GM12878 (cell line): ENCODE measurements at regions of chr17 and their contacts with region 1.

Region 1: GRCh38 chr17:78176548-78177025 is 8.2 kb downstream of the SYNGR2 start:
- DNase-seq: no peak
- ATAC-seq: peak; percentile 68
- H3K4me3 ChIP-seq: no peak overlapping the region
- H3K27ac ChIP-seq: no peak overlapping the region
- H3K4me1 ChIP-seq: peaks cover 59% of the 10 kb centered on the region
- H3K27me3 ChIP-seq: no peaks in the 10 kb centered on the region
- CTCF ChIP-seq: peak; percentile 94 to 99 (median 99); a peak in 5 of 6 replicates
- EP300 ChIP-seq: no peak
- POLR2A ChIP-seq: peak; percentile 75
- RAD21 ChIP-seq: peak; percentile 82

Region 2: DNA sequence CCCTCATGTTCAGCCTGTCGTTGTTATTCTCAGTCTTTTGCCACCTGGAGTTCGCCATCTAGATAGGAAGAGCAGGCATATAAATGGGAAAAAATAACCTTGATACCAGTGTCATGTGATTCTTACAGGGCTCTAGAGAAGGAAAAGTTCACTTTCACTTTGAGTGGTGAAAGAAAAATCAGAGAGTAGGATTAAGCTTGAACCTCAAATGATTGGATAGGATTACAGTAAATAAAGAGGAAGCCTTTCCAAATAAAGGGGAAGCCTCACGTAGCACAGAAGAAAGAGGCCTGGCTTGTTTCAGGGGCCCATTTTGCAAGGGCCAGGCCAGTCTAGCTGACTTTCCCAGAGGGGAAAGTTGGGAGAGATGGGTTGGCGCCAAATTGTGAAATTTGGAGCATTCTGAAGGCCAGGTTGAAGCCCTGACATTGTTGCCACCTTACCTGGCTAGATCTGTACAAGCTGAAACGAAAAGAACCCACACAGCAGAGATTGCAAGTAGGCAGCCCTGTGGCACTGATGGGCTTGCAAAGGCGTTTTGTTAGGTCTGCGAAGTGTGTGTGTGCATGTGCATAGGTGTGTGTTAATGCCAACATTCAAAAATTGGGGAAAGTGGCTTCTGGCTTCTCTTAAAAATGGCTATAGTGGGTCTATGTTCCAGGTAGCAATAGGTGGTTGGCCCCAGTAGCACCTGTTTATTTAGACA is 86.9 kb before region 1 on chr17:
- CTCF ChIA-PET with region 1: interaction called, 49 read pairs
- POLR2A ChIA-PET with region 1: no interaction called
- RAD21 ChIA-PET with region 1: interaction called, 25 read pairs
- SMC1A ChIA-PET with region 1: interaction called, 8 read pairs
- in situ Hi-C with region 1: no loop called
- intact Hi-C with region 1: loop called (anchors 1 kb)
- DNase-seq: no peak
- ATAC-seq: no peak
- H3K4me3 ChIP-seq: no peak overlapping the region
- H3K27ac ChIP-seq: no peak overlapping the region
- H3K4me1 ChIP-seq: no peaks in the 10 kb centered on the region
- H3K27me3 ChIP-seq: no peaks in the 10 kb centered on the region
- CTCF ChIP-seq: no peak
- EP300 ChIP-seq: no peak
- POLR2A ChIP-seq: no peak
- RAD21 ChIP-seq: no peak

Region 3: GRCh38 chr17:78128551-78129350 is 47.8 kb before region 1 on chr17 and contains the start of gene TMC6:
- CTCF ChIA-PET with region 1: interaction called, 132 read pairs
- POLR2A ChIA-PET with region 1: interaction called, 85 read pairs
- RAD21 ChIA-PET with region 1: interaction called, 83 read pairs
- SMC1A ChIA-PET with region 1: interaction called, 51 read pairs
- in situ Hi-C with region 1: no loop called
- intact Hi-C with region 1: no loop called
- DNase-seq: no peak
- ATAC-seq: peak; percentile 13
- H3K4me3 ChIP-seq: peak within 1 kb of the TSS; percentile 94
- H3K27ac ChIP-seq: peak within 1 kb of the TSS; percentile 95
- H3K4me1 ChIP-seq: peaks cover 61% of the 10 kb centered on the region
- H3K27me3 ChIP-seq: no peaks in the 10 kb centered on the region
- CTCF ChIP-seq: no peak
- EP300 ChIP-seq: peak in 1 of 2 experiments; percentile 9; a peak in 1 of 4 replicates
- POLR2A ChIP-seq: peak; percentile 89
- RAD21 ChIP-seq: no peak
- polyA plus RNA-seq, gene TMC6: 1.9 to 11.5 TPM

Region 4: DNA sequence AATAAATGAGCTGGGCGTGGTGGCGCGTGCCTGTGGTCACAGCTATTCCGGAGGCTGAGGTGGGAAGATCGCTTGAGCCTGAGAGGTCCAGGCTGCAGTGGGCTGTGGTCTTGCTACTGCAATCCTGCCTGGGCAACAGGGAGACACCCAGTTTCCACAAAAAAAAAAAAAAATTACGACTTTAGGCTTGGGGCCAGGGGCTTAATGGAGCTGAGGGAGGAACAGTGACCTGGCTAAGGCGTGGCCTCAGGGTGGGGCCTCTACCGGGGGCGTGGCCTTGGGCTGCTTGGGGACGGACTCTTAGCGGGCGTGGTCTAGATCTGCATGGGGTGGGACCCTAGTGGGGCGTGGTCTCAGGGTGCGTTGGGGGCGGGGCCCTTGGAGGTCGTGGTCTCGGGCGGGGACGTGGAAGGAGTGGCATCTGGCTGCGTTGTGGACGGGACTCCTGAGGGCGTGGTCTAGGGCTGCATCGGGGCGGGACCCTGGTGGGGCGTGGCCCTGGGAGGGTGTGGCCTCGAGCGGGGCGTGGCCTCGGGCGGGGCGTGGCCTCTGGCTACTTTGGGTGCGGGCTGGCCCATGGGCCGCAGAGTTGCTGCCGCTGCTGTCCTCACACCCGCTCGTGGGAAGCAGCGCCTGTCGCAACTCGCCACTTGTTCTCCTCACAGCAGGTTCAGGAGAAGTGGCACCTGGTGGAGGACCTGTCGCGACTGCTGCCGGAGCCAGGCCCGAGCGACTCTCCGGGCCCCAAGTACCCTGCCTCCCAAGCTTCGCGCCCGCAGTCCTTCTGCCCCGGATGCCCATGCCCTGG is 36.2 kb before region 1 on chr17:
- CTCF ChIA-PET with region 1: interaction called, 132 read pairs
- POLR2A ChIA-PET with region 1: interaction called, 37 read pairs
- RAD21 ChIA-PET with region 1: interaction called, 83 read pairs
- SMC1A ChIA-PET with region 1: interaction called, 51 read pairs
- in situ Hi-C with region 1: no loop called
- intact Hi-C with region 1: loop called (anchors 1 kb)
- DNase-seq: peak; percentile 90
- ATAC-seq: peak; percentile 90
- H3K4me3 ChIP-seq: no peak overlapping the region
- H3K27ac ChIP-seq: no peak overlapping the region
- H3K4me1 ChIP-seq: peaks cover 64% of the 10 kb centered on the region
- H3K27me3 ChIP-seq: no peaks in the 10 kb centered on the region
- CTCF ChIP-seq: no peak
- EP300 ChIP-seq: no peak
- POLR2A ChIP-seq: peak; percentile 87
- RAD21 ChIP-seq: no peak

Region 5: GRCh38 chr17:78186692-78187595 is 10.4 kb after region 1 on chr17 and contains the starts of genes AFMID and TK1:
- CTCF ChIA-PET with region 1: interaction called, 54 read pairs
- POLR2A ChIA-PET with region 1: interaction called, 19 read pairs
- RAD21 ChIA-PET with region 1: interaction called, 10 read pairs
- SMC1A ChIA-PET with region 1: interaction called, 5 read pairs
- in situ Hi-C with region 1: no loop called
- intact Hi-C with region 1: no loop called
- DNase-seq: peak; percentile 87
- ATAC-seq: peak; percentile 95
- H3K4me3 ChIP-seq: peak within 1 kb of the TSS; percentile 96
- H3K27ac ChIP-seq: peak within 1 kb of the TSS; percentile 71
- H3K4me1 ChIP-seq: peaks cover 5% of the 10 kb centered on the region; the same call in 1 of the 2 replicates
- H3K27me3 ChIP-seq: no peaks in the 10 kb centered on the region
- CTCF ChIP-seq: peak; percentile 27 to 56 (median 37); a peak in 3 of 6 replicates
- EP300 ChIP-seq: no peak
- POLR2A ChIP-seq: peak; percentile 94
- RAD21 ChIP-seq: no peak
- polyA plus RNA-seq, gene AFMID: 50.3 to 98.8 TPM
- polyA plus RNA-seq, gene TK1: 4.6 to 13.0 TPM

Region 6: DNA sequence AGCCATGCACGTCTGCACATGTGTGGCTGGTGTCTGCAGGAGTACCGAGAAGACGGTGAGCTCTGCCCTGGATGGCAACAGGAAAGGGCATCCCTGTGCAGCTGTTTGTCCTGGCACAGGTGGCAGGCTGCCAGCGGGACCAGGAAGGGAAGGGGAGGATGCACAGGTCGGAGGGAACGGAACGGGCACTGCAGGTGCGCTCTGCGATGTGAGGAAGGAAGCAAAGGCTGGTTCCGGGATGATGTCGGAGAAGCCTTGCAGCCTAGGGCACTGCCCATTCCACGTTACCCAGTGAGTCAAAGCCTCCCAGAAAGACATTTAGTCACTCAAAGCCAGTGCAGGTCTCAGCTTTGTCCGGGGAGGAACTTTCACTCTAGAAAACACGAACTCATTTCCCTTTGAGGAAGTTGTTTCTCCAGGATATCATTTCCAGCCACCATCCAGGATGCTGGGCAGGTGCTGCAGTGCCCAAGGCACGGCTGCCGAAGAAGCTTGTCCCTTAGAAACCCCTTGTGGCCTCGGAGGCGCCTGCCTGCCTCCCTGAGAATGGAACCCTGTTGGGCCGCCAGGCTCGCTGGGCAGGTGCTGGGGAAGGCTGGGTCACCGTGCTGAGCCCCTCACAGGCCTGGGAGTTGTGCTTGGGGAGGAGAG is 50.3 kb after region 1 on chr17:
- CTCF ChIA-PET with region 1: no interaction called
- POLR2A ChIA-PET with region 1: no interaction called
- RAD21 ChIA-PET with region 1: no interaction called
- SMC1A ChIA-PET with region 1: no interaction called
- in situ Hi-C with region 1: no loop called
- intact Hi-C with region 1: no loop called
- DNase-seq: no peak
- ATAC-seq: no peak
- H3K4me3 ChIP-seq: no peak overlapping the region
- H3K27ac ChIP-seq: no peak overlapping the region
- H3K4me1 ChIP-seq: no peaks in the 10 kb centered on the region
- H3K27me3 ChIP-seq: peaks cover 4 to 6% of the 10 kb centered on the region in 2 experiments; a peak in 2 of 4 replicates
- CTCF ChIP-seq: no peak
- EP300 ChIP-seq: no peak
- POLR2A ChIP-seq: peak; percentile 45; the same call in 1 of the 2 replicates
- RAD21 ChIP-seq: no peak

Region 7: GRCh38 chr17:78250891-78251794 is 74.6 kb after region 1 on chr17:
- CTCF ChIA-PET with region 1: interaction called, 20 read pairs
- POLR2A ChIA-PET with region 1: no interaction called
- RAD21 ChIA-PET with region 1: interaction called, 8 read pairs
- SMC1A ChIA-PET with region 1: interaction called, 9 read pairs
- in situ Hi-C with region 1: no loop called
- intact Hi-C with region 1: no loop called
- DNase-seq: no peak
- ATAC-seq: peak; percentile 87
- H3K4me3 ChIP-seq: no peak overlapping the region
- H3K27ac ChIP-seq: no peak overlapping the region
- H3K4me1 ChIP-seq: peaks cover 29% of the 10 kb centered on the region
- H3K27me3 ChIP-seq: no peaks in the 10 kb centered on the region; a peak in 1 of 4 replicates
- CTCF ChIP-seq: peak; percentile 99 to 100 (median 99)
- EP300 ChIP-seq: no peak
- POLR2A ChIP-seq: no peak
- RAD21 ChIP-seq: peak; percentile 83